Sigmoid colon (tissue), 7 donors: ENCODE measurements at regions of chr7 and their contacts with region 1.

Region 1: DNA sequence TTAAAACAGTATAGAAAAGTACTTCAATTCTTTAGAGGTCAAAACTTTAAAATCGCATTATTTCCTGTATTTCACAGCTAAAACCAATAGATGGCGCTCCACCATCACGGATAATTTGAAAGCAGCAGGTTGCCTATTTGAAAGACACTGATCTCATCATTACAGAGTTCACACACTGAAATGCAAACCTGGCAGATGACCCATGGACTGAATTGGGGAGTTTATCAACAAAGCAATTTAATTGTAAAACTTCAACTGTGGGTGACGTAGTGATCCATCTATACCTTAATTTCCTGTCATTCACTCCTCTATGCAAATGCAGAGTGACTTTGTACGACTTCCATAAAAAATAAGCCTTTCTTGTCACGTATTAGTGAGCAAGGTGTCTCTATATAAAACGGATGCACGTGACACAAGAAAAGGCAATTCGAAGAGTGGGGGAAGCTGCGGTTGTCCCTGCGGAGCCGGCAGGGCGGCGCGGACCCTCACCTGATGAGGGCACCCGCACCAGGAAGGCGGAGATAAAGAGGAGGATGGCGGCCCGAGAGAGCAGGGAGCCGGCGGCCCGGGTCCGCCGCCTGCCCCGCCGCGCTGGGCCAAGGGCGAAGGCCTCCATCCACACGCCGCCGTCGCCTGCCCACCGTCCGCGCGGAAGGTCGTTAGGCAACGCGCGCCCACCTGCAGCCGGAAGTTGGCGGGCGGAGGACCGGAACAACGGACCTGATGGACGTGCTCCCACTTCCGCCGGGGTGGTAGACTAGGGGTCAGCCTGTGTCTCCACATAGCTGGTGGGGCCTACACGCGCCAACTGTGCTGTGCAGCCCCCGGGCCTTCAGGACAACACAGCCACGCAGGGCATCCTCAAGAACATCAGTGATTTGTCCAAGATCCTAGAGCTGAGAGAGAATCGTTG is at the start of gene ZPBP:
- DNase-seq: no peak
- H3K4me3 ChIP-seq: peak within 1 kb of the TSS; percentile 14 to 53 (median 43)
- H3K27ac ChIP-seq: no peak within 1 kb of the TSS
- H3K4me1 ChIP-seq: peaks cover 0 to 9% (median 7%) of the 10 kb centered on the region in 4 donors
- H3K27me3 ChIP-seq: no peaks in the 10 kb centered on the region
- CTCF ChIP-seq: peak; percentile 7 to 68 (median 56)
- EP300 ChIP-seq: no peak
- POLR2A ChIP-seq: no peak
- total RNA-seq, gene ZPBP: not detected

Region 2: GRCh38 chr7:50418086-50418515 is 325.3 kb after region 1 on chr7:
- intact Hi-C with region 1: loop called (anchors 5 kb)
- DNase-seq: peak; percentile 76
- H3K4me3 ChIP-seq: no peak overlapping the region
- H3K27ac ChIP-seq: no peak overlapping the region
- H3K4me1 ChIP-seq: no peaks in the 10 kb centered on the region
- H3K27me3 ChIP-seq: no peaks in the 10 kb centered on the region
- CTCF ChIP-seq: peak in 3 of 4 experiments; percentile 23 to 59 (median 44)
- EP300 ChIP-seq: no peak
- POLR2A ChIP-seq: no peak

Region 3: GRCh38 chr7:51366930-51367613 is 1274.2 kb after region 1 on chr7:
- intact Hi-C with region 1: loop called (anchors 10 kb)
- DNase-seq: no peak
- H3K4me3 ChIP-seq: no peak overlapping the region
- H3K27ac ChIP-seq: no peak overlapping the region
- H3K4me1 ChIP-seq: no peaks in the 10 kb centered on the region
- H3K27me3 ChIP-seq: no peaks in the 10 kb centered on the region
- CTCF ChIP-seq: peak in 3 of 4 experiments; percentile 49 to 60 (median 55)
- EP300 ChIP-seq: no peak
- POLR2A ChIP-seq: no peak